ENCODE measurements at regions of chr10 and their contacts with region 1.

Region 1: GRCh38 chr10:96089670-96090462 is 40.2 kb upstream of the ZNF518A start:
- DNase-seq: peak; percentile 97
- H3K4me3 ChIP-seq: peak overlapping the region; percentile 80
- H3K27ac ChIP-seq: peak overlapping the region; percentile 93
- H3K4me1 ChIP-seq: no peaks in the 10 kb centered on the region
- H3K27me3 ChIP-seq: peaks cover 13% of the 10 kb centered on the region
- CTCF ChIP-seq: no peak

Region 2: GRCh38 chr10:96129387-96130325 is 39.8 kb after region 1 on chr10 and contains the start of gene ZNF518A:
- CTCF ChIA-PET with region 1: no interaction called
- POLR2A ChIA-PET with region 1: interaction called, 12 read pairs
- intact Hi-C with region 1: loop called (anchors 1 kb)
- DNase-seq: peak; percentile 97
- H3K4me3 ChIP-seq: peak within 1 kb of the TSS; percentile 62
- H3K27ac ChIP-seq: peak within 1 kb of the TSS; percentile 99
- H3K4me1 ChIP-seq: peaks cover 7% of the 10 kb centered on the region
- H3K27me3 ChIP-seq: peaks cover 13% of the 10 kb centered on the region
- CTCF ChIP-seq: no peak
- total RNA-seq, gene ZNF518A: 13.7 and 17.2 TPM in 2 replicates

Measured in A673 (cell line).